Ovary (tissue), 10 donors: ENCODE measurements at regions of chr2 and their contacts with region 1.

Region 1: GRCh38 chr2:170815746-170816503 is 762 bp upstream of the GAD1 start:
- DNase-seq: peak; percentile 40 to 70 (median 70)
- H3K4me3 ChIP-seq: peak overlapping the region; percentile 36
- H3K27ac ChIP-seq: no peak overlapping the region
- H3K4me1 ChIP-seq: peaks cover 6% of the 10 kb centered on the region
- H3K27me3 ChIP-seq: peaks cover 4% of the 10 kb centered on the region
- CTCF ChIP-seq: peak; percentile 57 to 61 (median 58)
- EP300 ChIP-seq: no peak
- POLR2A ChIP-seq: no peak

Region 2: GRCh38 chr2:170361090-170361936 is 454.6 kb before region 1 on chr2:
- intact Hi-C with region 1: loop called in 1 of 4 experiments (anchors 10 kb)
- DNase-seq: no peak
- H3K4me3 ChIP-seq: no peak overlapping the region
- H3K27ac ChIP-seq: no peak overlapping the region
- H3K4me1 ChIP-seq: no peaks in the 10 kb centered on the region
- H3K27me3 ChIP-seq: no peaks in the 10 kb centered on the region
- CTCF ChIP-seq: no peak
- EP300 ChIP-seq: no peak
- POLR2A ChIP-seq: no peak

Region 3: GRCh38 chr2:170396799-170397459 is 419.0 kb before region 1 on chr2:
- intact Hi-C with region 1: loop called in 2 of 4 experiments (anchors 10 kb)
- DNase-seq: no peak
- H3K4me3 ChIP-seq: no peak overlapping the region
- H3K27ac ChIP-seq: no peak overlapping the region
- H3K4me1 ChIP-seq: no peaks in the 10 kb centered on the region
- H3K27me3 ChIP-seq: no peaks in the 10 kb centered on the region
- CTCF ChIP-seq: no peak
- EP300 ChIP-seq: no peak
- POLR2A ChIP-seq: no peak

Region 4: DNA sequence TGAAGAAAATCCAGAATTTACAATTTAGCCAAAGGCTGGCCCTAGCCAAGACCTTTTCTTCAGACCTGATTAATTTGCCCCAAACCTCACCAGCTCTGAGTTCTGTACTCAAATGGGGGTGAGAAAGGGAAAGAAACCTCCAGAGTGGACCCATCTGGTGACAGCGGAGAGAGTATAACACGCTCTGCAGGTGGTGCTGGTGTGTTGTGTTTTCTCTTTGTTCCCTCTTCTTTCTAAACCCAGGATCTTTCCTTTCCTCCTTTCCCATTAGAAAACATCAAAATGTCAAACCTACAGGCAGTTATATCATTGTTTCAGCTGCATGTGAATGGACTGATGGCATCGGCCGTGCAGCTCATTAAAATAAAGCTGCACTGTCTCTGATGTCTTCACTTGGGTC is 354.0 kb before region 1 on chr2:
- intact Hi-C with region 1: loop called in 1 of 4 experiments (anchors 10 kb)
- DNase-seq: no peak
- H3K4me3 ChIP-seq: no peak overlapping the region
- H3K27ac ChIP-seq: no peak overlapping the region
- H3K4me1 ChIP-seq: no peaks in the 10 kb centered on the region
- H3K27me3 ChIP-seq: no peaks in the 10 kb centered on the region
- CTCF ChIP-seq: no peak
- EP300 ChIP-seq: no peak
- POLR2A ChIP-seq: no peak

Region 5: DNA sequence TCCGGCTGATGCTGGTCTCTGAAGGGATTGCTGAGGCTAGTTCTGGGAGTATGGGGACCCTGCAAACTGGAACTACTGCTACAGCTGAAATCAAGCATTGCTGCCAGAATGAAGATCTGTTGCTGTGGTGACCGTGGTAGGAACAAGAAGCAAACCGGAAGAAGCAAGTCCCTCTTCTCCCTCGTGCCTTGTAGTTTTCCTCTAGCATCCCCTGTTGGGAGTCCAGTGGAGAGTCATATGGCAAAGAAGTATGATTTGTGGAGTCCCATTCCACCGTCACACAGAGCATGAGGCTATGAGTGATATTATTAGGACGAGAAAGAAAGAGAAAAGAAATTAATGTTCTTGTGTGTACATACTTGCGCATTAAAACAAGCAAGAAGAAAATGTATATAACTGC is 239.6 kb before region 1 on chr2:
- intact Hi-C with region 1: no loop called
- DNase-seq: no peak
- H3K4me3 ChIP-seq: no peak overlapping the region
- H3K27ac ChIP-seq: no peak overlapping the region
- H3K4me1 ChIP-seq: no peaks in the 10 kb centered on the region
- H3K27me3 ChIP-seq: no peaks in the 10 kb centered on the region
- CTCF ChIP-seq: no peak
- EP300 ChIP-seq: no peak
- POLR2A ChIP-seq: no peak

Region 6: GRCh38 chr2:170679607-170680079 is 136.3 kb before region 1 on chr2:
- intact Hi-C with region 1: no loop called
- DNase-seq: no peak
- H3K4me3 ChIP-seq: no peak overlapping the region
- H3K27ac ChIP-seq: no peak overlapping the region
- H3K4me1 ChIP-seq: no peaks in the 10 kb centered on the region
- H3K27me3 ChIP-seq: no peaks in the 10 kb centered on the region
- CTCF ChIP-seq: no peak
- EP300 ChIP-seq: no peak
- POLR2A ChIP-seq: no peak

Region 7: GRCh38 chr2:170715062-170715931 is 100.6 kb before region 1 on chr2 and contains the start of gene SP5:
- intact Hi-C with region 1: loop called in 1 of 4 experiments (anchors 10 kb)
- DNase-seq: peak in 4 of 5 donors; percentile 47 to 68 (median 63)
- H3K4me3 ChIP-seq: peak within 1 kb of the TSS; percentile 42
- H3K27ac ChIP-seq: no peak within 1 kb of the TSS
- H3K4me1 ChIP-seq: peaks cover 15% of the 10 kb centered on the region
- H3K27me3 ChIP-seq: no peaks in the 10 kb centered on the region
- CTCF ChIP-seq: no peak
- EP300 ChIP-seq: no peak
- POLR2A ChIP-seq: no peak
- total RNA-seq, gene SP5: 0.30 to 2.9 (median 1.2) TPM in 6 of 7 donors, not detected in the other

Region 8: GRCh38 chr2:170966648-170967436 is 150.9 kb after region 1 on chr2:
- intact Hi-C with region 1: no loop called
- DNase-seq: no peak
- H3K4me3 ChIP-seq: no peak overlapping the region
- H3K27ac ChIP-seq: no peak overlapping the region
- H3K4me1 ChIP-seq: no peaks in the 10 kb centered on the region
- H3K27me3 ChIP-seq: no peaks in the 10 kb centered on the region
- CTCF ChIP-seq: no peak
- EP300 ChIP-seq: no peak
- POLR2A ChIP-seq: no peak

Region 9: DNA sequence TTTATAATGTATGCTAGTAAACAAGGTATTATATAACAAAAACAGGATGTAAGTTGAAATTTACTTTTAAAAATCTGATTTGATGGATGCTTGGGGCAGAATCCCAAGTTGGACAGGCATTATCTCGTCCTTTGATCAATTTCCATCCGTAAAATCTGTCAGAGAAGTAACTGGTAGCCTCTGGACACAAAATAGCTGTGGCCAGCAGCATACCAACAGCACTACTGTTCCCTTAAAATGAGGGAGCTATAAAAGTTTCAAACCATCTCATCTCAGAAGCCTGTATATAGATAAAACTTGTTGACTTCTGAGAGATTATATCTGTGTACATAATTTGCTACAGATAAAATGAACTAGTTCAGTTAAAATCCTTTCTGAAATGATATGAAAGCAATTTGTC is 1169.2 kb after region 1 on chr2:
- intact Hi-C with region 1: no loop called
- DNase-seq: no peak
- H3K4me3 ChIP-seq: no peak overlapping the region
- H3K27ac ChIP-seq: no peak overlapping the region
- H3K4me1 ChIP-seq: no peaks in the 10 kb centered on the region
- H3K27me3 ChIP-seq: no peaks in the 10 kb centered on the region
- CTCF ChIP-seq: no peak
- EP300 ChIP-seq: no peak
- POLR2A ChIP-seq: no peak